ENCODE measurements at regions of chr20 and their contacts with region 1.

Region 1: DNA sequence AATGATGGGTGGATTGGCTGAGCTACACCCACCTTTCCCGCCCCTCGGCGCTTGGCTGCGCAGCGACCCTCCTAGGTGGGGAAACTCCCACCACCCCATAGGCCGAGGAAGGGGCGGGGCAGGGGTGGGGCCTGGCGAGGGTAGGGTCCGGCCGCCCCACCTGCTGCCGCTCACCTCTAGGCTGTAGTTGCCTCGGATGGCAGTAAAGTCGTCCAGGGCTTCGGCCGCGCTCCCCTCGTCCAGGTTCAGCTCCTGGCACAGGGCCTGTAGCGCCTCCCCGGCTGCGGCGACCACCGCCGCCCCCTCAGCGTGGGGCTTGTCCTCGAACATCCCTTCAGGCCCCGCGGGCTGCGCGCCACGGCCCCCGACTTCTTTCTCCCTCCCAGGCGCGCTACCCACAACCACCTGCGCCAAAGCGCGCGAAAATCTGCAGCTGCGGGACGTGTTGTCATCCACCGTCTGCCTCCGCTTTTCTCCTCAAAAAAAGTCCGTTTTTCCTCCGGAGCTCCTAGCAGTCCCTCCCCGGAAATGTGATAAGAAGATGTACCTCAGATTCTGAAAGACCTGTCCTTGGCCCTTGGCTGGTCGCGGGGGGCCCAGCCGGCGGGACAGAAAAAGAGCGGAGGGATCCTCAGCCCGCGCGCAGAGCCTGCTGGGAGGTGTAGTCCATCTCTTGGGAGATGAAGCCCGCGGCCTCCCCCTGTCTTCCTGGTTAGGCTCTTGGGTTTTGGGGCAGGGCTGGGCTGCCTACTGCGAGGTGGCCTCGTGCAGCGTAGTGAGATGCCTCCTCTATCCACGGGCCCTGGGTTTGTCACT is at the start of gene RBL1:
- DNase-seq: peak; percentile 83
- H3K4me3 Mint-ChIP-seq: peak within 1 kb of the TSS; percentile 89
- H3K27ac Mint-ChIP-seq: peak within 1 kb of the TSS; percentile 87
- H3K4me1 Mint-ChIP-seq: peaks cover 16% of the 10 kb centered on the region
- H3K27me3 Mint-ChIP-seq: no peaks in the 10 kb centered on the region
- CTCF ChIP-seq: no peak
- total RNA-seq, gene RBL1: 8.8 and 9.2 TPM in 2 replicates

Region 2: DNA sequence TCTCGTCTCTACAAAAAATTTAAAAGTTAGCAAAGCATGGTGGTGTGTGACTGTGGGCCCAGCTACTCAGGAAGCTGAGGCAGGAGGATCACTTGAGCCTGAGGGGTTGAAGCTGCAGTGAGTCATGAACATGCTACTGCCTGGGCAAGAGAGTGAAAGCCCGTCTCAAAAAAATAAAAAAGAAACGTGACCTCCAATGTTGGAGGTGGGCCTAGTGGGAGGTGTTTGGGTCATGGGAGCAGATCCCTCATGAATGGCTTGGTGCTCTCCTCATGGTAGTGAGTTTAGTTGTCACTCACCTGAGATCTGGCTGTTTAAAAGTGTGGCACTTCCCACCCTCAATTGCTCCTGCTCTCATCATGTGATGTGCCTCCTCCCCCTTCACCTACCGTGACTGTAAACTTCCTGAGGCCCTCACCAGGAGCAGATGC is 24.3 kb before region 1 on chr20:
- CTCF ChIA-PET with region 1: no interaction called
- POLR2A ChIA-PET with region 1: interaction called, 12 read pairs
- intact Hi-C with region 1: no loop called
- DNase-seq: peak; percentile 88
- H3K4me3 Mint-ChIP-seq: peak overlapping the region; percentile 40
- H3K27ac Mint-ChIP-seq: peak overlapping the region; percentile 92
- H3K4me1 Mint-ChIP-seq: peaks cover 16% of the 10 kb centered on the region
- H3K27me3 Mint-ChIP-seq: no peaks in the 10 kb centered on the region
- CTCF ChIP-seq: no peak

Region 3: GRCh38 chr20:37081717-37082289 is 14.0 kb before region 1 on chr20:
- CTCF ChIA-PET with region 1: interaction called, 7 read pairs
- POLR2A ChIA-PET with region 1: interaction called, 11 read pairs
- intact Hi-C with region 1: no loop called
- DNase-seq: no peak
- H3K4me3 Mint-ChIP-seq: no peak overlapping the region
- H3K27ac Mint-ChIP-seq: no peak overlapping the region
- H3K4me1 Mint-ChIP-seq: no peaks in the 10 kb centered on the region
- H3K27me3 Mint-ChIP-seq: no peaks in the 10 kb centered on the region
- CTCF ChIP-seq: peak; percentile 13

Region 4: GRCh38 chr20:37406010-37406998 is 310.5 kb after region 1 on chr20:
- CTCF ChIA-PET with region 1: no interaction called
- POLR2A ChIA-PET with region 1: no interaction called
- intact Hi-C with region 1: no loop called
- DNase-seq: peak; percentile 49
- H3K4me3 Mint-ChIP-seq: peak overlapping the region; percentile 64
- H3K27ac Mint-ChIP-seq: no peak overlapping the region
- H3K4me1 Mint-ChIP-seq: peaks cover 12% of the 10 kb centered on the region
- H3K27me3 Mint-ChIP-seq: no peaks in the 10 kb centered on the region
- CTCF ChIP-seq: no peak

Region 5: GRCh38 chr20:37640600-37641561 is 545.1 kb after region 1 on chr20:
- CTCF ChIA-PET with region 1: no interaction called
- POLR2A ChIA-PET with region 1: no interaction called
- intact Hi-C with region 1: no loop called
- DNase-seq: peak; percentile 55
- H3K4me3 Mint-ChIP-seq: no peak overlapping the region
- H3K27ac Mint-ChIP-seq: no peak overlapping the region
- H3K4me1 Mint-ChIP-seq: peaks cover 8% of the 10 kb centered on the region
- H3K27me3 Mint-ChIP-seq: peaks cover 70% of the 10 kb centered on the region
- CTCF ChIP-seq: no peak